ENCODE measurements at regions of chr14 and their contacts with region 1.

Region 1: DNA sequence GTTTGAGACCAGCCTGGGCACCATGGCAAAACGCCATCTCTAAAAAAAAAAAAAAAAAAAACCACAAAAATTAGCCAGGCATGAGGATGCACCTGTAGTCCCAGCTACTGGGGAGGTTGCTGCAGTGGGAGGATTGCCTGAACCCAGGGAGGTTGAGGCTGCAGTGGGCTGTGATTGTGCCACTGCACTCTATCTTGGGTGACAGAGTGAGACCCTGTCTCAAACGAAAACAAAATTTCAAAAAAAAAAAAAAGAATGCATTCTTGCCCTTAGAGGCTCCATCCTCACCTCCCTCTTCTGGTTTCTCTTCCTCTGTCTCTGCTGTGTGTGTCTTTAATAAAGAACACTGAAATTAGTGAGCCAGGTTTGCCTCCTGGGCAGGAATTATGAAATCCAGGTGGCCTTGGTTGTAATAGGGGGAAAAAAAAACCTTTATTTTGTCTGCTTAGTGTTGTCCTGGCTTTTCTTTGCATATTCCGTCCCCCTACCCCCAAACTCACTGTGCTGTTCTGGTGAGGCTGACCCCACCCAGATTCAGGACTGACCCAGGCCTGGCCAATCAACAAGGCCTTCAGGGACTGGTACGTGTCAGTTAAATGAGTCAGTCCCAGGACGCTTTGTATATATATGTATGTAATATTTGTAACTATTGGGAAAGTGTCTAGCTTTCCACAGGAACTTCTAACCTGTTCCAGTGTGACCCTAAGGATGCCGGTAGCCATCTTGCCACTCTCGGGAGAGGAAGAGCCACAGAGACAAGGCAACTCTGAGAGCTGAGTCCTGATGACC is 107.6 kb downstream of the VCPKMT start:
- DNase-seq: no peak
- ATAC-seq: peak; percentile 74
- H3K4me3 Mint-ChIP-seq: peak overlapping the region; percentile 13
- H3K27ac Mint-ChIP-seq: peak overlapping the region; percentile 84
- H3K4me1 Mint-ChIP-seq: peaks cover 64% of the 10 kb centered on the region
- H3K27me3 Mint-ChIP-seq: no peaks in the 10 kb centered on the region
- CTCF ChIP-seq: no peak

Region 2: DNA sequence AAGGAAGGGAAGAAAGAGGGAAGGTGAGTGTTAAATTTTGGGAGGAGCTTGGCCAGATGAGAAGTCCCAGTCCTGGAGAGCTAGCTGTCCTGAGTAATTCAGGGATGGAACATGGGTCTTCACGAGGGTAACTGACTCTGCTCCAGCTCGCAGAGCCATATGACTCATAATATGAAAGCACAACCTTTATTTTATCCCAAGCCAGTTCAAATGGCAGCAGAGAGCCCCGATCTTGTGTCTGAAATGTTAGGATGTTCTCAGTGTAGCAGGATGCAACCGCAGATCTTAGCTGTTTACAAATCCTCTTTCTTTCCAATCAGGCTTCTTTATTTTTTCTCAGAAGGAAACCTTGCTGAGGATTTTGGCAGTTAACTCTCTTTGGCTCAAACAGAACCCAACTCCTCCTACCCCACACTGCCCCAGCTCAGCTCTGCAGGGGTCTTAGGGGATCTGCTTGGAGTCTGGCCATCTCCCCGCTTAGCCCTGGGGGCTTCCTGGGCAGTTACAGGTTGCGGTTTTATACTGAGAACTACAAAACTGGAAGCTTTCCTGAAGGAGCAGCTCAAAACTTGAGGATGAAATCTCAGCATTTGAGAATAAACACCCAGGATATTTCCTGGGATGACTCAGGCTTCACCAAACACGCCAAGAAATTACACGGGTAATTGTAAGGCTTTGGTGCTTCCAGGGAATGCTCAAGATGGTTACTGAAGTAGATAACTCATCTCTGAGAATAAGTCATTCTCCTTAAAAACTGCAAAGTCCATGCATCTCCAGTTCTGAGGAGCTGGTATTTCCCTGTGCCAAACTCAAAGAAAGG is 15.1 kb after region 1 on chr14:
- CTCF ChIA-PET with region 1: no interaction called
- POLR2A ChIA-PET with region 1: interaction called, 4 read pairs
- intact Hi-C with region 1: loop called (anchors 2 kb)
- DNase-seq: no peak
- ATAC-seq: no peak
- H3K4me3 Mint-ChIP-seq: no peak overlapping the region
- H3K27ac Mint-ChIP-seq: no peak overlapping the region
- H3K4me1 Mint-ChIP-seq: peaks cover 18% of the 10 kb centered on the region
- H3K27me3 Mint-ChIP-seq: no peaks in the 10 kb centered on the region
- CTCF ChIP-seq: no peak

Region 3: GRCh38 chr14:50222061-50222613 is 213.4 kb after region 1 on chr14:
- CTCF ChIA-PET with region 1: no interaction called
- POLR2A ChIA-PET with region 1: no interaction called
- intact Hi-C with region 1: no loop called
- DNase-seq: no peak
- ATAC-seq: no peak
- H3K4me3 Mint-ChIP-seq: no peak overlapping the region
- H3K27ac Mint-ChIP-seq: peak overlapping the region; percentile 18
- H3K4me1 Mint-ChIP-seq: peaks cover 50% of the 10 kb centered on the region
- H3K27me3 Mint-ChIP-seq: no peaks in the 10 kb centered on the region
- CTCF ChIP-seq: no peak

Measured in activated B cell treated with CpG ODN at 0.5 μM for 24 hours (primary cell).